ENCODE measurements at regions of chr11 and their contacts with region 1.

Region 1: DNA sequence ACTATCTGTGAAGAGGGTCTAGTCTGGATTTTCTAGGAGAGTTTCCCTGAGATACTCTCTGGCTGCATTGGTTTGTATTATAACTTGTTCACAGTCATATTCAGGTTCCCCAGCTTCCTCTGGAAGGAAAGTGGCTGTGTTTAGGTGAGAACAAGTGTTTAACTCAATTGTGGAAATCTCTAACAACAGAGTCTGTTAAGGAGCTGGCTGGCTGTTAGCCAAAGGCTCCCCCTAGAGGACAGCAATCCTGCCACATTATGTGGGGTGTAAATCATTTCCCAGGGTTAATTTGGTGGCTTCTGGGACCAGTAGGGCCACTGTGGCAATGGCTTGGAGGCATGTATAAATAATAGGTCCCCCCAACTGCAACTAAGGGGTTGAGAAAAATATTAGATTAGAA is 18.4 kb downstream of the MS4A6E start:
- DNase-seq: peak; percentile 54
- H3K4me3 ChIP-seq: no peak overlapping the region
- H3K27ac ChIP-seq: no peak overlapping the region
- H3K4me1 ChIP-seq: no peaks in the 10 kb centered on the region
- H3K27me3 ChIP-seq: peaks cover 25 to 26% of the 10 kb centered on the region in 2 experiments
- CTCF ChIP-seq: peak; percentile 46 to 50
- POLR2A ChIP-seq: no peak

Region 2: GRCh38 chr11:60221181-60221580 is 124.3 kb before region 1 on chr11:
- CTCF ChIA-PET with region 1: no interaction called
- POLR2A ChIA-PET with region 1: no interaction called
- dilution Hi-C with region 1: no loop called
- intact Hi-C with region 1: no loop called
- DNase-seq: no peak
- H3K4me3 ChIP-seq: no peak overlapping the region
- H3K27ac ChIP-seq: no peak overlapping the region
- H3K4me1 ChIP-seq: no peaks in the 10 kb centered on the region
- H3K27me3 ChIP-seq: no peaks in the 10 kb centered on the region
- CTCF ChIP-seq: no peak
- POLR2A ChIP-seq: no peak

Region 3: DNA sequence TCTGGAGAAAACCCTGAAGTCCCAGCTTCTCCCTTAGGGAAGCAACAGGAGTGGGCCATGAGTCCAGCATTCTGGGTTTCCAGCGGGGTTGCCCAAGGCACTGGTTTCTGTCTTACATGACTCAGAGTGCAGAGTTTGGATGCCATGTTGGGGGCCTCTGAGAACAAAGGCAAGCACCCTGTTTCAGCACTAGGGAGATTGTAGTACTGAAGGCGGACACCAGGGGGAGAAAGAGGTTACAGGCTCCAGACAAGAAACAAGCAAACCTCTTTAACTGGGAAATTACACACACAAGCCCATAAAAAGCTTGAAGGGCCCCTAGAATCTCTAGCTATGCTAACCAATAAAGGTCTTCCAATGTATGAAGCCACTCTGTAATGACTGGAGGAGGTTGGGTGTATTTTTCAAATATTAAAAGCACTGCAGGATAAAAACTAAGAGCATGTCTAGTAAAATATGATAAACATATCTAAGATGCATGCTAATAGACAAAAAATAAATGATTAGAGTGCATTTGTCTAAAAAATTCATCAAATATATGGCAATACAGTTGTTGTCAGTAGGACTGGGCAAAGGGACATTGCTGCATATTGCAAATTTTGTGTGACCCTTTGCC is 11.4 kb before region 1 on chr11:
- CTCF ChIA-PET with region 1: interaction called, 74 read pairs
- POLR2A ChIA-PET with region 1: no interaction called
- dilution Hi-C with region 1: no loop called
- intact Hi-C with region 1: no loop called
- DNase-seq: peak; percentile 79
- H3K4me3 ChIP-seq: no peak overlapping the region
- H3K27ac ChIP-seq: no peak overlapping the region
- H3K4me1 ChIP-seq: no peaks in the 10 kb centered on the region
- H3K27me3 ChIP-seq: peaks cover 0 to 3% of the 10 kb centered on the region in 2 experiments
- CTCF ChIP-seq: peak; percentile 65 to 85
- POLR2A ChIP-seq: no peak

Region 4: GRCh38 chr11:60370811-60371298 is 25.4 kb after region 1 on chr11:
- CTCF ChIA-PET with region 1: interaction called, 10 read pairs
- POLR2A ChIA-PET with region 1: no interaction called
- dilution Hi-C with region 1: no loop called
- intact Hi-C with region 1: no loop called
- DNase-seq: peak; percentile 72
- H3K4me3 ChIP-seq: no peak overlapping the region
- H3K27ac ChIP-seq: peak overlapping the region; percentile 35
- H3K4me1 ChIP-seq: peaks cover 16% of the 10 kb centered on the region
- H3K27me3 ChIP-seq: peaks cover 3 to 6% of the 10 kb centered on the region in 2 experiments
- CTCF ChIP-seq: no peak
- POLR2A ChIP-seq: no peak

Region 5: GRCh38 chr11:60420015-60420414 is 74.5 kb after region 1 on chr11:
- CTCF ChIA-PET with region 1: no interaction called
- POLR2A ChIA-PET with region 1: no interaction called
- dilution Hi-C with region 1: no loop called
- intact Hi-C with region 1: no loop called
- DNase-seq: no peak
- H3K4me3 ChIP-seq: no peak overlapping the region
- H3K27ac ChIP-seq: no peak overlapping the region
- H3K4me1 ChIP-seq: no peaks in the 10 kb centered on the region
- H3K27me3 ChIP-seq: no peaks in the 10 kb centered on the region
- CTCF ChIP-seq: no peak
- POLR2A ChIP-seq: no peak

Region 6: DNA sequence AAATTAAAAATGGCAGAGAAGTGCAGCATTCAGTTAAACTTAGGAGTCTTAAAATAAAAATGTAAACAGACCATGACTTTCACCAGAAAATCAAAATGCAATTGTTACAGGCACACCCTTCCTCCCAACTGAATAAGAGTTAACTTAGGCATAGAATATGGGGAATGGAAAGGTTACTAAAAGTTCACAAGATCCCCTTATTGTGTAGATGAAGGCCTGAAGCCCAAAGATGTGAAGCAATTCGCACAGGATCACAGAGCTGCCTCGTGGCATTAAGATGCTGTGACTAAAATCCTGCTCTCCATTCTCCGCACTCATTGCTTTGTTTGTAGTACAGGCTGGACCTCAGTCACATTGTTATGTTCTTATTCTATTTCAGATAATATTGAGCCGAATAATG is 87.9 kb after region 1 on chr11:
- CTCF ChIA-PET with region 1: no interaction called
- POLR2A ChIA-PET with region 1: no interaction called
- dilution Hi-C with region 1: no loop called
- intact Hi-C with region 1: no loop called
- DNase-seq: no peak
- H3K4me3 ChIP-seq: no peak overlapping the region
- H3K27ac ChIP-seq: no peak overlapping the region
- H3K4me1 ChIP-seq: no peaks in the 10 kb centered on the region
- H3K27me3 ChIP-seq: no peaks in the 10 kb centered on the region
- CTCF ChIP-seq: no peak
- POLR2A ChIP-seq: no peak

Region 7: GRCh38 chr11:60615497-60615896 is 270.0 kb after region 1 on chr11:
- CTCF ChIA-PET with region 1: interaction called, 38 read pairs
- POLR2A ChIA-PET with region 1: no interaction called
- dilution Hi-C with region 1: no loop called
- intact Hi-C with region 1: loop called (anchors 1 kb)
- DNase-seq: no peak
- H3K4me3 ChIP-seq: no peak overlapping the region
- H3K27ac ChIP-seq: no peak overlapping the region
- H3K4me1 ChIP-seq: no peaks in the 10 kb centered on the region
- H3K27me3 ChIP-seq: peaks cover 2% of the 10 kb centered on the region in 2 experiments
- CTCF ChIP-seq: no peak
- POLR2A ChIP-seq: no peak

Measured in endothelial cell of umbilical vein (primary cell).